ENCODE measurements at regions of chr16 and their contacts with region 1.

Region 1: GRCh38 chr16:67883872-67884261 is 818 bp upstream of the NRN1L start:
- DNase-seq: peak; percentile 83
- ATAC-seq: peak; percentile 87
- H3K4me3 Mint-ChIP-seq: no peak overlapping the region
- H3K27ac Mint-ChIP-seq: no peak overlapping the region
- H3K4me1 Mint-ChIP-seq: no peaks in the 10 kb centered on the region
- H3K27me3 Mint-ChIP-seq: no peaks in the 10 kb centered on the region
- CTCF ChIP-seq: peak; percentile 94

Region 2: DNA sequence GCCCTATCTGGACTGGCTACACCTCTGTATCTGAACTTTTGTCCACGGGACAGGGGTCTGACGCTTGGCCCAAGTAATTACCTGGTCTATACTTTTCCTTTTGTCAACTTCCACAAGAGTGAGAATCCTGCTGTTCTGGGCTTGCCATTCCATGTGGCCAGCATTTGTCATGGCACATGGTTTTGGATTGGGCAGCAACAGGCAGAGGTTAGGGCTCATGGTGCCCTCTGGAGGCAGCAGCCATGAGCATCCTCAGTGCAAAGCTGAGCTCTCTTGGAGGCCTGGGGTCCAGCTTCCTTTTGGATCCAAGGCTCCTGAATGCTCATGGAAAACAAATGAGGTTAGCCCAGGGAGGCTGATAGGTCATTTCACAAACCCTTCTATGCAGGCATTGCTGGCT is 18.6 kb before region 1 on chr16:
- CTCF ChIA-PET with region 1: interaction called, 21 read pairs
- POLR2A ChIA-PET with region 1: no interaction called
- intact Hi-C with region 1: no loop called
- DNase-seq: peak; percentile 30
- ATAC-seq: peak; percentile 64
- H3K4me3 Mint-ChIP-seq: no peak overlapping the region
- H3K27ac Mint-ChIP-seq: no peak overlapping the region
- H3K4me1 Mint-ChIP-seq: no peaks in the 10 kb centered on the region
- H3K27me3 Mint-ChIP-seq: no peaks in the 10 kb centered on the region
- CTCF ChIP-seq: peak; percentile 33

Region 3: GRCh38 chr16:67910158-67910557 is 26.3 kb after region 1 on chr16:
- CTCF ChIA-PET with region 1: interaction called, 45 read pairs
- POLR2A ChIA-PET with region 1: interaction called, 8 read pairs
- intact Hi-C with region 1: no loop called
- DNase-seq: peak; percentile 72
- ATAC-seq: peak; percentile 99
- H3K4me3 Mint-ChIP-seq: no peak overlapping the region
- H3K27ac Mint-ChIP-seq: peak overlapping the region; percentile 34
- H3K4me1 Mint-ChIP-seq: peaks cover 22% of the 10 kb centered on the region
- H3K27me3 Mint-ChIP-seq: no peaks in the 10 kb centered on the region
- CTCF ChIP-seq: no peak

Region 4: GRCh38 chr16:67928561-67929364 is 44.9 kb after region 1 on chr16:
- CTCF ChIA-PET with region 1: interaction called, 81 read pairs
- POLR2A ChIA-PET with region 1: interaction called, 6 read pairs
- intact Hi-C with region 1: loop called (anchors 2 kb)
- DNase-seq: peak; percentile 87
- ATAC-seq: peak; percentile 96
- H3K4me3 Mint-ChIP-seq: no peak overlapping the region
- H3K27ac Mint-ChIP-seq: no peak overlapping the region
- H3K4me1 Mint-ChIP-seq: peaks cover 1% of the 10 kb centered on the region
- H3K27me3 Mint-ChIP-seq: no peaks in the 10 kb centered on the region
- CTCF ChIP-seq: peak; percentile 93

Region 5: DNA sequence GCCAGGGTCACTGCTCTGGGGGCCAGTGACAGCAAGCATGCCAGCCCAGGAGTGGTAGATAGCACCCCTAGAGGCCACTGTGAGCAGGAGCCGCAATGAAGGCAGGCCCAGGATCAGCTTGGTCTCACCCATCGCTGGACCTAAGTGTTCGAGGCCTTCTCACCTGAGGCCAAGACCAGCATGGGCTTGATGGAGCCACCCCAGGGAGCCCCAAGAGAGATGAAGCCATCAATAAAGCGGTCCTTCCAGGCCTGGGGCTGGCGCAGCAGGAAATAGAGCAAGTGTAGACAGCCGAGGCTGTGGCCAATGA is 58.3 kb after region 1 on chr16:
- CTCF ChIA-PET with region 1: interaction called, 19 read pairs
- POLR2A ChIA-PET with region 1: interaction called, 3 read pairs
- intact Hi-C with region 1: no loop called
- DNase-seq: peak; percentile 59
- ATAC-seq: peak; percentile 66
- H3K4me3 Mint-ChIP-seq: no peak overlapping the region
- H3K27ac Mint-ChIP-seq: peak overlapping the region; percentile 59
- H3K4me1 Mint-ChIP-seq: peaks cover 33% of the 10 kb centered on the region
- H3K27me3 Mint-ChIP-seq: no peaks in the 10 kb centered on the region
- CTCF ChIP-seq: peak; percentile 61